Activated CD4-positive, alpha-beta T cell treated with anti-CD3 and anti-CD28 coated beads for 36 hours (primary cell): ENCODE measurements at regions of chr12 and their contacts with region 1.

Region 1: GRCh38 chr12:31682136-31682962 is 22.9 kb downstream of the ETFBKMT start:
- DNase-seq: peak; percentile 76
- ATAC-seq: peak; percentile 95
- H3K4me3 Mint-ChIP-seq: no peak overlapping the region
- H3K27ac Mint-ChIP-seq: peak overlapping the region; percentile 53
- H3K4me1 Mint-ChIP-seq: peaks cover 6% of the 10 kb centered on the region
- H3K27me3 Mint-ChIP-seq: no peaks in the 10 kb centered on the region

Region 2: GRCh38 chr12:31651893-31652521 is 30.3 kb before region 1 on chr12:
- CTCF ChIA-PET with region 1: interaction called, 19 read pairs
- POLR2A ChIA-PET with region 1: no interaction called
- intact Hi-C with region 1: loop called in 1 of 2 experiments (anchors 1 kb)
- DNase-seq: no peak
- ATAC-seq: no peak
- H3K4me3 Mint-ChIP-seq: no peak overlapping the region
- H3K27ac Mint-ChIP-seq: peak overlapping the region; percentile 47
- H3K4me1 Mint-ChIP-seq: peaks cover 11% of the 10 kb centered on the region
- H3K27me3 Mint-ChIP-seq: no peaks in the 10 kb centered on the region

Region 3: GRCh38 chr12:31804185-31804504 is 121.8 kb after region 1 on chr12:
- CTCF ChIA-PET with region 1: no interaction called
- POLR2A ChIA-PET with region 1: no interaction called
- intact Hi-C with region 1: loop called in 1 of 2 experiments (anchors 5 kb)
- DNase-seq: no peak
- ATAC-seq: peak; percentile 66
- H3K4me3 Mint-ChIP-seq: peak overlapping the region; percentile 46
- H3K27ac Mint-ChIP-seq: peak overlapping the region; percentile 7
- H3K4me1 Mint-ChIP-seq: peaks cover 44% of the 10 kb centered on the region
- H3K27me3 Mint-ChIP-seq: no peaks in the 10 kb centered on the region

Region 4: GRCh38 chr12:32106517-32107358 is 424.4 kb after region 1 on chr12 and contains the start of gene BICD1:
- CTCF ChIA-PET with region 1: no interaction called
- POLR2A ChIA-PET with region 1: interaction called, 4 read pairs
- intact Hi-C with region 1: loop called in 1 of 2 experiments (anchors 5 kb)
- DNase-seq: peak; percentile 86
- ATAC-seq: peak; percentile 83
- H3K4me3 Mint-ChIP-seq: peak within 1 kb of the TSS; percentile 83
- H3K27ac Mint-ChIP-seq: peak within 1 kb of the TSS; percentile 92
- H3K4me1 Mint-ChIP-seq: peaks cover 20% of the 10 kb centered on the region
- H3K27me3 Mint-ChIP-seq: peaks cover 2% of the 10 kb centered on the region
- total RNA-seq, gene BICD1: 12.7 to 15.1 TPM

Region 5: GRCh38 chr12:32312049-32312670 is 629.8 kb after region 1 on chr12:
- CTCF ChIA-PET with region 1: interaction called, 5 read pairs
- POLR2A ChIA-PET with region 1: no interaction called
- intact Hi-C with region 1: loop called in 1 of 2 experiments (anchors 2 kb)
- DNase-seq: no peak
- ATAC-seq: no peak
- H3K4me3 Mint-ChIP-seq: no peak overlapping the region
- H3K27ac Mint-ChIP-seq: no peak overlapping the region
- H3K4me1 Mint-ChIP-seq: peaks cover 2% of the 10 kb centered on the region
- H3K27me3 Mint-ChIP-seq: no peaks in the 10 kb centered on the region